Heart right ventricle (tissue), 16 donors: ENCODE measurements at regions of chr7 and their contacts with region 1.

Region 1: DNA sequence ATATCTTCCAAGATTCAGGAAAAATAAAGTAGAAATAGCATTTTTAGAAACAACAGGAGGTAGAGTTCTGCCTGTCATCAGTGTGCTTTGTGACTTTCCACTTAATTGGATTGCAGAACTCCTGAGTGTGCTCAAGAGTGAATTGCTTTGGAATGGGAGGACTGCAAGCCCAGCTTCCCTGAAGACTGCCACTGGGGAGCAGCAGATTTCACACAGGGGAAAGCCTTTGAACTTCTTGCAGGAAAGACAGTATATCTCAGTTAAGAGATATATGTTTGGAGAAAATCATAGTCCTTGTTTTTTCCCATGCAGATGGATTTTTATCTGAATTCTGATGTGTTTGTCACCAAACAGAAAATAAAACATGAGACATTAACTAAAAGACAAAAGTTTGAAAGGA is 124.5 kb downstream of the TMEM168 start:
- DNase-seq: peak in 1 of 2 donors; percentile 6
- ATAC-seq: peak in 3 of 8 donors; percentile 52 to 77 (median 68)
- H3K4me3 ChIP-seq: no peak overlapping the region
- H3K27ac ChIP-seq: no peak overlapping the region
- H3K4me1 ChIP-seq: no peaks in the 10 kb centered on the region
- H3K27me3 ChIP-seq: no peaks in the 10 kb centered on the region
- CTCF ChIP-seq: peak in 7 of 9 donors; percentile 16 to 57 (median 37)

Region 2: DNA sequence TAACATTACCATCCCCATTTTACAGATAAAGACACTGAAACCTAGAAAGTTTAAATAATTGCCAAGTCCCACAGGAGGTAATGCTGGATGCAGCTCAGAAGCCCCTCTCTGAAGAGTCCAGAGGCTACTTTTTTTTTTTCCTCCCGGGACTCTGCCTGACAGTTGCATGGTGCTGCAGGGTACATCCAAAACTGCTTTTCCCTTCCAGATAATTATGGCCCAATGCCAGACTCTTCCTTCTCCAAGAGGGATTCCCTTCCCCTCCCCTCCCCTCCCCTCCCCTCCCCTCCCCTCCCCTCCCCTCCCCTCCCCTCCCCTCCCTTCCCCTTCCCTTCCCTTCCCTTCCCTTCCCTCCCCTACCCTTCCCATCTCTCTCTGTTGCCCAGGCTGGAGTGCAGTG is 62.1 kb before region 1 on chr7:
- intact Hi-C with region 1: loop called in 1 of 10 experiments (anchors 10 kb)
- DNase-seq: no peak
- ATAC-seq: no peak
- H3K4me3 ChIP-seq: no peak overlapping the region
- H3K27ac ChIP-seq: no peak overlapping the region
- H3K4me1 ChIP-seq: no peaks in the 10 kb centered on the region
- H3K27me3 ChIP-seq: no peaks in the 10 kb centered on the region
- CTCF ChIP-seq: no peak